Sigmoid colon (tissue), 7 donors: ENCODE measurements at regions of chr15 and their contacts with region 1.

Region 1: GRCh38 chr15:68795298-68795848 is 25.3 kb downstream of the ANP32A start:
- DNase-seq: peak; percentile 95
- H3K4me3 ChIP-seq: peak overlapping the region in 2 of 4 donors; percentile 15 to 16
- H3K27ac ChIP-seq: peak overlapping the region; percentile 57 to 80 (median 64)
- H3K4me1 ChIP-seq: peaks cover 0 to 73% (median 64%) of the 10 kb centered on the region in 4 donors
- H3K27me3 ChIP-seq: no peaks in the 10 kb centered on the region
- CTCF ChIP-seq: no peak
- EP300 ChIP-seq: peak in 1 of 4 donors; percentile 26
- POLR2A ChIP-seq: no peak

Region 2: DNA sequence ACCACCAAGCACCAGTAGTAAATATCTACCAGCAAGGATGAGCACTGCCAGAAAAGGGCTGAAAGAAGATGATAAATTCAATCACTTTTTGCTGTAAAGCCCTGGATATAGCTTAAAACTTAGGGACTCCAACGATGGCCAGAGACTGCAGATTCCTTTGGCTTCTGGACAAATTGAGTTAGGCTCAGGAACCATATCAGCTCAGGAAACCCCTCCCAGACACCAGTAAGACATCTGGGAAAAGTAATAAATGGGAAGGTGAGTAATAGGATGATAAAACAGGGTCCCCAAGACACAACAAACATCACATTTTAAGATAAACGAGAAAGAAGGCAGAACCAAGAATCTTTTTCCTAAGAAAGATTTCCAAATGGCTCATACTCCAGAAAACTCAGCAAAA is 39.6 kb before region 1 on chr15:
- intact Hi-C with region 1: no loop called
- DNase-seq: no peak
- H3K4me3 ChIP-seq: no peak overlapping the region
- H3K27ac ChIP-seq: no peak overlapping the region
- H3K4me1 ChIP-seq: no peaks in the 10 kb centered on the region
- H3K27me3 ChIP-seq: no peaks in the 10 kb centered on the region
- CTCF ChIP-seq: no peak
- EP300 ChIP-seq: no peak
- POLR2A ChIP-seq: no peak

Region 3: DNA sequence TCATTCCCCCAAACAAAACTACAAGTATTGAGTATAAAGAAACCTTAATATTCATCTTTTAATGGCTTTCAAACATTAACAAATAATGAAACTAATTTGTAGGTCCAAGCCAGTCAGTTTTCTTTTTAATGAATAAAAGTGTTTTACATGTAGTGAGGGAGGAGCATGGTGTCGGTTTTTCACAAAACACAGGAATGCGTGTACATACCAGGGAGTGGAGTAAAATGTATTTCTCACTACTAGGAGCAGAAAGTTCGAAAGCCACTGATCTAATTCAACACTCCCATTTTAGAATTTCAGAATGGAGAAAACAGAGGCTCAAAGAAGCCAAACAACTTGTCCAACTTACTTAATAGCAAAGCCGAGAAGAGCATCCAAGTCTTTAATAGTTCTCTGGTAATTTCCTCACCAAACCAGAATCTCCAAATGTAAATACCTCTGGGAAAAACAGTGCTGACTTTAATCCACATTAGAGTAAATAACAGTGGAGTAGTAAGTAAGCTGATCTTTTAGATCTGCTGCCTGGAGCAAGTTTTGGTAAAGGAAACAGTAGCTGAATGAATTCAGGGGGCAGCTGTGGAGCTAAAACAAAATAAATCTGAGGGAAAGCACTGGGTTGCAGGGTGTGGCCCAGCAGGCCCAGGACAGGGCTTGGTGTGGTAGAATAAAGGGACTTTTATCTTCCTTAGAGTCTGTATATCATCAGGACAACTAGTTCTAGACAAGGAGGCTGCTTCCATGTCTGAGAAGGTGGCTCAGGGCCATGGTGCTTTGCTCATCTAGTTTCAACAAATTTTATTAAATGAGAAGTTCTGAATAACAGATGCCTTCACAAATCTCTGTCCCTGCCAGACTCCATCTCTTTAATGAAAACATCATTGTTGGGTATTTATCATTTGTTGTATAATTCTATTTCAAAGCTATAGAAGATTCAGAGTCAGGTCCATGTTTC is 17.5 kb after region 1 on chr15:
- intact Hi-C with region 1: loop called (anchors 2 kb)
- DNase-seq: peak; percentile 69
- H3K4me3 ChIP-seq: no peak overlapping the region
- H3K27ac ChIP-seq: peak overlapping the region; percentile 12 to 67 (median 62)
- H3K4me1 ChIP-seq: peaks cover 0 to 80% (median 58%) of the 10 kb centered on the region in 4 donors
- H3K27me3 ChIP-seq: no peaks in the 10 kb centered on the region
- CTCF ChIP-seq: no peak
- EP300 ChIP-seq: no peak
- POLR2A ChIP-seq: no peak

Region 4: GRCh38 chr15:68843425-68844311 is 48.3 kb after region 1 on chr15:
- intact Hi-C with region 1: no loop called
- DNase-seq: no peak
- H3K4me3 ChIP-seq: peak overlapping the region in 3 of 4 donors; percentile 27 to 39 (median 36)
- H3K27ac ChIP-seq: no peak overlapping the region
- H3K4me1 ChIP-seq: peaks cover 0 to 9% (median 8%) of the 10 kb centered on the region in 4 donors
- H3K27me3 ChIP-seq: peaks cover 0 to 74% (median 47%) of the 10 kb centered on the region in 3 donors
- CTCF ChIP-seq: no peak
- EP300 ChIP-seq: no peak
- POLR2A ChIP-seq: no peak